Activated naive CD4-positive, alpha-beta T cell treated with anti-CD3 and anti-CD28 coated beads, Interleukin-2, amount 10 ng/mL, durations not matched to agents 7 days and 5 days (primary cell): ENCODE measurements at regions of chr13 and their contacts with region 1.

Region 1: DNA sequence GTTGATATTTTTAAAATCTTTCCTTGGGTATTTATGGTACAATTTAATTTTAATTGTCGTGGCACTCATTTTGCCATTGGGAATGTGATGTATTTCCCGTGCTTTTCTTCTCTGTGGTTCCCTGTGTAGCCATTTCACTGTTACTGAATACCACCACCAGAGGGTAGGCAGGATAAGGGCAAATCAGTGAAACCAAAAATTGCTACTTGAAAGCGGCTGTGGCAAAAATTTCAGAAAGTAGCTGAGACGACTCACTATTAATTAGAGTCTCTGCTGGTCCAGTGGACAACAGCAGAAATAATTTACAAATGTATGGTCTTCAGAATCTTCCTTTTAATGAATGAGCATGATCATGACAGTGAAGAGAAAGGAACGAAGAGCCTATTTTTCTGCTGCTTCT is 34.4 kb upstream of the MIR17HG start:
- DNase-seq: peak; percentile 30
- H3K4me3 Mint-ChIP-seq: no peak overlapping the region
- H3K27ac Mint-ChIP-seq: no peak overlapping the region
- H3K4me1 Mint-ChIP-seq: peaks cover 23% of the 10 kb centered on the region
- H3K27me3 Mint-ChIP-seq: peaks cover 17% of the 10 kb centered on the region

Region 2: GRCh38 chr13:91347202-91347995 is 34.3 kb after region 1 on chr13 and contains the start of gene MIR17HG:
- CTCF ChIA-PET with region 1: interaction called, 11 read pairs
- DNase-seq: peak; percentile 93
- H3K4me3 Mint-ChIP-seq: peak within 1 kb of the TSS; percentile 92
- H3K27ac Mint-ChIP-seq: peak within 1 kb of the TSS; percentile 98
- H3K4me1 Mint-ChIP-seq: peaks cover 48% of the 10 kb centered on the region
- H3K27me3 Mint-ChIP-seq: no peaks in the 10 kb centered on the region

Region 3: GRCh38 chr13:91417660-91418325 is 104.7 kb after region 1 on chr13:
- CTCF ChIA-PET with region 1: no interaction called
- DNase-seq: no peak
- H3K4me3 Mint-ChIP-seq: no peak overlapping the region
- H3K27ac Mint-ChIP-seq: no peak overlapping the region
- H3K4me1 Mint-ChIP-seq: no peaks in the 10 kb centered on the region
- H3K27me3 Mint-ChIP-seq: no peaks in the 10 kb centered on the region